PC-3 (cell line): ENCODE measurements at regions of chr5 and their contacts with region 1.

Region 1: DNA sequence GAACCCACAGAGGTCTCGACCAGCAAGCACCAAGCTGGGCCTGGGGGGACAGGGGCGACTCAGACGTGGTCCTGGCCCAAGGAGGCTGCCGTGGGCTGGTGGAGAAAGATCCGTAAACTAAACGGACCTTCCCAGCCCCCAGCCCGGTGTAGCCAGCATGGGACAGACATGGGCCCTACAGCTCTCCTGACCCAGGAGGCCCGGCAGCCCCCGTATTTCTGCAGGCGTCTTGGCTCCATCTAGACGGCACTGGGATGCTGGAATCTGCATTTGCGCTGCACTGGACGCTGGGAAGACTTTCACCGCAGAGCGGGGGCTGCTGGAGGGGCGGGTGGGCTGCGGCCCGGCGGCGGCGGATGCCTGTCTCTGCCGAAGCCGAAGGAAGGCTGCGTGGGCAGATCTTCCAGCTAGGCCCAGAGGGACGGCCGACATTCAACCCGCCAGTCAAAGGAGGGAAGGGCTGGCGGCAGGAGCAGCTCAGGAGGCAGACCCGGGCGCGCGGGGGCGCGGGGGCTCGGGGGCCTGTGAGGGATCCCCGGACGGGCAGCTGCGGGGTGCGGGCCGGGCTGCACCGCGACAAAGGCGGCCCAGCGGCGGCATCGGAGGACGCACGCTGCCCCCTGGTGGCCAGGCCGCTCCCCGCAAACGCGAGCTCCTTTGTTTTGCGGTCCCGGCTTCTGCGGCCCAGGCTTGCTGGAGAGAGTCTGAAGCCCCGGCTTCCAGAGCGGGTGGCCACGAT is 266.2 kb downstream of the NSG2 start:
- DNase-seq: peak; percentile 68
- ATAC-seq: peak; percentile 88
- H3K4me3 ChIP-seq: peak overlapping the region; percentile 67
- H3K27ac ChIP-seq: no peak overlapping the region
- H3K4me1 ChIP-seq: no peaks in the 10 kb centered on the region; the same call in 1 of the 2 replicates
- H3K27me3 ChIP-seq: peaks cover 80% of the 10 kb centered on the region
- CTCF ChIP-seq: peak; percentile 88

Region 2: DNA sequence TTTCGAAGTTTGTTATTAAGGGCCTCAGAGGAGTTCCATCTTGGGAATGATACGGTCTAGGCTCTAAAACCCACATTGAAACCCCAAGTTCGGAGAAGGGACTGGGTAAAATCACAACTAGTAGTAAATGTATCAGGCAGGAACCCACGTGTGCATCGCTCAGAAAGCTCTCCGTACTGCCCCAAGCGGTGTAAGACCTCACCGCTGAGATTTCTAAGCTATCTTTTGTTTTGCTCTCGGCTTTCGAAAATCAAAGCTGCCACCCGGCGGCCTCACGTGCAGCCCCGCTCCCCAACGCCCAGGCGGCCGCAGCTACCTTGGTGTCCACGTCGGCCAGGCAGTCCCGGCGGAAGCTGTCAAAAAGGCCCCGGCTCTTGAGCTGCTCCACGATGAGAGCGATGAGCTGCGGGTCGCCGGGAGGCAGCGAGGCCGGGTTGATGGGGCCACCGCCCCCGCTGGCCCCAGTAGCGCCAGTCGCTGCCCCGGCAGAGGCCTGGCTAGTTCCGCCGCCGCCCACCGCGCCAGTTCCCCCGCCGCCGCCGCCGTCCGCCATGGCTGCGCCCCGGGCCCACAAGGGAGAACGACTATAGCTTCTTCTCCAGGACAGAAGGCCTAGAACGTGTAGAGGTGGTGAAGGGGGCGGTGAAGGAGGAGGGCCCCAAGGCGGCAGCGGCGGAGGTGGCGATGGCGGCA is 695.7 kb before region 1 on chr5:
- CTCF ChIA-PET with region 1: no interaction called
- POLR2A ChIA-PET with region 1: no interaction called
- intact Hi-C with region 1: loop called (anchors 2 kb)
- DNase-seq: peak; percentile 79
- ATAC-seq: peak; percentile 62
- H3K4me3 ChIP-seq: peak overlapping the region; percentile 90
- H3K27ac ChIP-seq: peak overlapping the region; percentile 71
- H3K4me1 ChIP-seq: peaks cover 36% of the 10 kb centered on the region
- H3K27me3 ChIP-seq: no peaks in the 10 kb centered on the region
- CTCF ChIP-seq: peak; percentile 81

Region 3: GRCh38 chr5:174020397-174021296 is 291.1 kb before region 1 on chr5:
- CTCF ChIA-PET with region 1: interaction called, 9 read pairs
- POLR2A ChIA-PET with region 1: no interaction called
- intact Hi-C with region 1: loop called (anchors 1 kb)
- DNase-seq: peak; percentile 93
- ATAC-seq: peak; percentile 99
- H3K4me3 ChIP-seq: peak overlapping the region; percentile 44
- H3K27ac ChIP-seq: no peak overlapping the region
- H3K4me1 ChIP-seq: no peaks in the 10 kb centered on the region
- H3K27me3 ChIP-seq: peaks cover 34% of the 10 kb centered on the region
- CTCF ChIP-seq: peak; percentile 88

Region 4: DNA sequence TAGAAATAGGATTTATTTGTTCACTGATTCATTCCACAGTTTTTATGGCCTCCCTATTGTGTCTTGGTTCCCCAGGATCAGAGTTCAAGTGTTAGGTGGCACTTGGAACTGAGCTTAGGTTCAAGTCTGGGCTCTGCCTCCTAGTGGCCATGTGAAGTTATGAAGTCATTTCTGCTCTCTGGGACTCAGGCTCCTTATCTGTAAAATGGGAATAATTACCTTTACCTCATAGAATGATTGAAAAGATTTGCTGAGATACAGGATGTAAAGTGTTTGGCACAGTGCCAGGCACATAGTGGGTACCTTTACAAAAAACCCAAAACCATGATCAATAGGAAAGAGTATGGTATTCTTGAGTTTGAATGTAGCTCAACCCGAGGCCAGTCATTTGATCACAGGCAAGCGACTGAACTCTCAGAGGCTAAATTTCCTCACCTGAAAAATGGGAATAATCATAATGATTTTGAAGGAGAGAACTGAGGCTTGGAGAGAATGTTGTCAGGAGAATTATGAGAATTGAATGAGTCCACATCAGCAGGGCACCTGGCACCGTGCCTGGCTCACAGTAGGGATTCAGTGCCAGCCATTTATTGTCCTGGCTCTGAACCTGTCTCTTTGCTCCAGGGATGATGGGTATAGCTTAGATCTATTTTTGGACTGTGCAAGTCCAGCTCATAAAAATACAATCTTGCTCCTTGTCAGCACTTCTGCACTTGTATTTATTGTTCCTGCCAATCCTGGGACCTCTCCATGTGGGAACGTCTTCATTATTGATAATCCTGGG is 255.4 kb before region 1 on chr5:
- CTCF ChIA-PET with region 1: no interaction called
- POLR2A ChIA-PET with region 1: no interaction called
- intact Hi-C with region 1: no loop called
- DNase-seq: peak; percentile 10
- ATAC-seq: no peak
- H3K4me3 ChIP-seq: no peak overlapping the region
- H3K27ac ChIP-seq: no peak overlapping the region
- H3K4me1 ChIP-seq: no peaks in the 10 kb centered on the region
- H3K27me3 ChIP-seq: peaks cover 50% of the 10 kb centered on the region; the same call in 1 of the 2 replicates
- CTCF ChIP-seq: peak; percentile 36; the same call in 1 of the 2 replicates

Region 5: DNA sequence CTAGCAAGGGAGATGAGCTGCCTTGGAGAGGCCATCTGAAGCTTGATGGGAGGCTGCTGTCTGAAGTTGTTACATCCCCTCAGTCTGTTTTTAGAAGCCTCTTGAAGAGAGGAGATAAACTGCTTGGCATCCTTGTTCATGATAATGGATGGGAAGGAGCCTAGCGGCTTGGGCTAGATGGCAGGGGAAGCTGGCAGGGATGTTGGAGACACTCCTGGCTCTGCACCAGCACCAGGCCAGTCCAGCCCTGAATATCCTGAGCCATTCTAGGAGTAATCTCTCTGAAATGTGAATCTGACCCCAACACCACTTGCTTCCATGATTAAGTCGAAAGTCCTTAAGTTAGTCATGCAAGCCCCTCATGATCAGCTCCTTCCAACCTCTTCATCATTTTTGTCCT is 44.3 kb after region 1 on chr5:
- CTCF ChIA-PET with region 1: no interaction called
- POLR2A ChIA-PET with region 1: no interaction called
- intact Hi-C with region 1: no loop called
- DNase-seq: no peak
- ATAC-seq: no peak
- H3K4me3 ChIP-seq: no peak overlapping the region
- H3K27ac ChIP-seq: peak overlapping the region; percentile 89
- H3K4me1 ChIP-seq: peaks cover 21% of the 10 kb centered on the region
- H3K27me3 ChIP-seq: no peaks in the 10 kb centered on the region
- CTCF ChIP-seq: no peak